Panc1 (cell line): ENCODE measurements at regions of chr7 and their contacts with region 1.

Region 1: DNA sequence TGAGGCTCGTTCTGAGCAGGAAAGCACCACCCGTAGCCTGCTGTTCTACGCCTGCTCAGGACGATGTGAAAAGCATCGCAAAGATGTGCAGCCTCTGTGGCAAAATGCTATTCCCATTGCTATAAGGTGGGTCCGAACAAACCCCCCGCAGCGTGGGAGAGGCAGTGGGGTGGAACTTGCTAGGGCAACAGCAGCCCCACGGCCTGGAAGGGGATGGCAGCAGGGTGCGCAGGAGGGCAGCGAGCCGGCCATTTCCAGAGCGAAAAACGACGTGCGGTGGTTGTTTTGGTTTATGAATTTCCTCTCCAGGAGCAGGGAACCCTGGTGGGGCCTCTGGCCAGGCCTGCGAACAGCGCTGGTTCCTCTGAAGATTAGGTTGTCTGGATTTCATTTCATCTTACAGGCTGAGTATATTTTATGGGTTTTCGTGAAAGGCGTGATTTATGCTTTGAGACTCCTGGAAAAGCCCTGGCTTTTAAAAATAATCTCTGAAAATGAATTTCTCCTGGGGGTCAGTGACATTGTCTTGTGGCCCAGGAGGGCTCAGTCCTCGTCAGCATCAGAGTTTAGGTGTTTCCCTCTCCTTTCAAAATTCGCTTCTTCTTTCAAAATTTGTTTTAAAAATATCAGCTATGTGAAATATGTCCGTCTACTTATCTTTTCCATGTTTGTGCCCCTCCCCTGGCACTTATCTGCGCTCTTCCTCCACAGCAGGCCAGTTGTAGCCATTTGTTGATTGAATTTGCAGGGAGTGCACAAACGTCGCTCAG is 42.3 kb upstream of the UBE3C start:
- DNase-seq: no peak
- ATAC-seq: no peak
- H3K4me3 ChIP-seq: no peak overlapping the region
- H3K27ac ChIP-seq: no peak overlapping the region
- H3K4me1 ChIP-seq: no peaks in the 10 kb centered on the region
- H3K27me3 ChIP-seq: no peaks in the 10 kb centered on the region
- CTCF ChIP-seq: no peak

Region 2: DNA sequence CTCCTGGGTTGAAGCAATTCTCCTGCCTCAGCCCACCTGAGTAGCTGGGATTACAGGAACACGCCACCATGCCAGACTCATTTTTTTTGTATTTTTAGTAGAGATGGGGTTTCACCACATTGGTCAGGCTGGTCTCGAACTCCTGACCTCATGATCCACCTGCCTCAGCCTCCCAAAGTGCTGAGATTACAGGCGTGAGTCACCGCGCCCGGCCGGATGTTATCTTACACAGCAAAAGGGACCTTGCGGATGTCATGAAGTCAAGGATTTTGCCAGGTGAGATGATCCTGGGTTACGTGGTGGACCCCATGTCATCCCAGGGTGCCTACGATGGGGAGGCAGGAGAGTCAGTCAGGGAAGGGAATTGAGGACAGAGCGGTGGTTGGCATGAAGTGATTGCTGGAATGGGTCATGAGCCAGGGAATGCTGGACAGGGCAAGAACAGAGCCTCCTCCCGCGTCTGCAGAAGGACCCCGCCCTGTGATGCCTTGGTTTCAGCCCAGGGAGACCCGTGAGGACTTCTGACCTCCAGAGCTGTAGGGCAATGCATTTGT is 33.5 kb after region 1 on chr7:
- CTCF ChIA-PET with region 1: interaction called, 10 read pairs
- POLR2A ChIA-PET with region 1: no interaction called
- in situ Hi-C with region 1: no loop called
- intact Hi-C with region 1: no loop called
- DNase-seq: no peak
- ATAC-seq: no peak
- H3K4me3 ChIP-seq: no peak overlapping the region
- H3K27ac ChIP-seq: no peak overlapping the region
- H3K4me1 ChIP-seq: no peaks in the 10 kb centered on the region
- H3K27me3 ChIP-seq: peaks cover 7% of the 10 kb centered on the region; the same call in 1 of the 2 replicates
- CTCF ChIP-seq: no peak

Region 3: DNA sequence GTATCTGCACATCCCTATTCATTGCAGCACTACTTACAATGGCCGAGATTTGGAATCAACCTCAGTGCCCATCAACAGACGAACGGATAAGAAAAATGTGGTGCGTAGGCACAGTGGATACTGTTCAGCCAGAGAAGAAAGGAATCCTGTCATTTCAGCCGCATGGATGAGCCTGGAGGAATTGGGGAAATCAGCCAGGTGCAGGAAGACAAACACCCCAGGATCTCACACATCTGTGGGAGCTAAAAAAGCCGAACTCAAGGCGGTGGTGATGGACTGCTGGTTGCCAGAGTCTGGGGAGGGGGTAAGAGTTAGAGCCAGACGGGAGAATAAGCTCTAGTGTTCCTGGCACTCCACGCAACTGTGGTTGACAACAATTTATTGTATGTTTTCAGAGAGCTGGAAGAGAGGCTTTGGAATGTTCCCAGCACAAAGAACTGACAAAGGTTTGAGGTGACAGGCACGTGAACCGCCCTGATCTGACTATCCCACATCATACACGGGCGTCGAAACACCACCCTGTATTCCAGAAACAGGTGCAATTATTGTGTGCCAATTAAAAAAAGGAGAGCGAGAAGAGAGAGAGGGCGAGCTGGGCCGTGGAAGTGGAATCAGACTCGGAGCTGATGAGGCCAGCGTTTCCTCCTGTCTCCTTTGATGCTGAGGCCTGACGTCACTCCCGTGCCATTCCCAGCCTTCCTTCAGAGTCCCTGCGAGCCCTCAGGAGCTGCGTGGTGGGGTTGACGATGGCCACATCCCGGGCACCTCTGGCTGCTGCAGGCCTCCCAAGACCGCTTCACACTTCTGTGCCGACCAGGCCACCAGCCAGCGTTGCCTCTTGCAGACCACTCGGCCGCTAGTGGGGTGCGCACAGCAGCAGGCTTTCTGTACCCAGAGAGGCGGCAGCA is 429.8 kb after region 1 on chr7:
- CTCF ChIA-PET with region 1: no interaction called
- POLR2A ChIA-PET with region 1: no interaction called
- in situ Hi-C with region 1: no loop called
- intact Hi-C with region 1: no loop called
- DNase-seq: no peak
- ATAC-seq: no peak
- H3K4me3 ChIP-seq: no peak overlapping the region
- H3K27ac ChIP-seq: no peak overlapping the region
- H3K4me1 ChIP-seq: no peaks in the 10 kb centered on the region
- H3K27me3 ChIP-seq: no peaks in the 10 kb centered on the region
- CTCF ChIP-seq: no peak